ENCODE measurements at regions of chr4 and their contacts with region 1.

Region 1: DNA sequence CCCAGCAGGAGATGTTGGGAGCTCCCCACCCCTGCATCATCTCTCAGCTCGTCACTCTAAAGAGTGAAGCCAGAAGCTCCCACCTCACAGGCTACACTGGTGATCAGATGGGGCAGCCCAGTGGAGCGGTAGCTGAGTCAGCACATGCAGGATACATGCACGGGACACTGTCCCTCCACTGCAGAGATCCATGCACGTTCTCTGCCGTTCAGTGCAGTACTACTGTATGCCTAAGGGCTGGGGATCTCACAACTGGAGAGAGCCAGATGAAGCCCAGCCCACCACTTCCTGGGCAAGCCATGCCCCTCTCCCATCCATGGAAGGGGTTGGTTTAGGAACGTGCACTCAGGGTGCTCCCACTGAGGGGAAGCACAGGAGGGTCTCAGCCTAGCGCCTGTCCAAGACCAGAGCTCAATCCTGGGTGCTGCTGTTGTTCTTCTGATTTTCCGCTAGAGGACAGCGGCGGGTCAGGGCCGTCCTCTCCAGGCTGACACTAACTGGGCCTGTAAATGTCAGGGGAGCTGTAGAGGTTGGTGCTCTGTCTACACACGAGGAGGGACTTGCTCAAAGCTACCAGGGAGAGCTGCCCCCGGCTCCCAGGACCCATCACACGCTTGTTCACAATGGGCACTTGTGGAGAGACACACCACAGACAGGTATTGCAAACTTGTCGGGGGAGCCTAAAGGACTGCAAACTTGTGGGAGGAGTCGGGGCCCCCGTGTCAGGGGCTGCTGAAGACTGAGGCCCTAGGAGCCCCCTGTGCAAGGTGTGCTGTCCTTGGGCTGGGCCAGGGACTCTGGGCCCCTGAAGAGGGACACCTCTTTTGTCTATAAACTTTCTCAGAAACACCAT is 18.2 kb upstream of the ABLIM2 start:
- DNase-seq: peak in 28 of 35 experiments; percentile 16 to 63 (median 38)
- ATAC-seq: peak; percentile 81 to 97 (median 84)
- H3K4me3 ChIP-seq: no peak overlapping the region
- H3K4me3 Mint-ChIP-seq: no peak overlapping the region
- H3K27ac ChIP-seq: no peak overlapping the region
- H3K27ac Mint-ChIP-seq: no peak overlapping the region
- H3K4me1 ChIP-seq: peaks cover 0 to 6% of the 10 kb centered on the region in 2 experiments
- H3K4me1 Mint-ChIP-seq: peaks cover 0 to 7% (median 2%) of the 10 kb centered on the region in 3 donors
- H3K27me3 ChIP-seq: peaks cover 0 to 26% of the 10 kb centered on the region in 2 experiments
- H3K27me3 Mint-ChIP-seq: peaks cover 0 to 8% of the 10 kb centered on the region in 2 donors

Region 2: GRCh38 chr4:8403173-8403753 is 226.5 kb after region 1 on chr4:
- CTCF ChIA-PET with region 1: interaction called, 4 to 11 read pairs
- POLR2A ChIA-PET with region 1: no interaction called
- DNase-seq: peak in 28 of 35 experiments; percentile 8 to 63 (median 28)
- ATAC-seq: peak in 2 of 4 experiments; percentile 38 to 46
- H3K4me3 ChIP-seq: no peak overlapping the region
- H3K4me3 Mint-ChIP-seq: no peak overlapping the region
- H3K27ac ChIP-seq: no peak overlapping the region
- H3K27ac Mint-ChIP-seq: no peak overlapping the region
- H3K4me1 ChIP-seq: no peaks in the 10 kb centered on the region
- H3K4me1 Mint-ChIP-seq: no peaks in the 10 kb centered on the region
- H3K27me3 ChIP-seq: no peaks in the 10 kb centered on the region
- H3K27me3 Mint-ChIP-seq: no peaks in the 10 kb centered on the region

Measured in T-cell (primary cell).